Activated T-helper 1 cell treated with anti-CD3 and anti-CD28 coated beads, Interleukin-12 subunit alpha, Interleukin-12 subunit beta, Interleukin-2, Interleukin-4 antibody, amounts not matched to agents 30 ng/mL and 10 ng/mL and 1 ng/mL, durations not matched to agents 14 hours and 24 hours and 36 hours (primary cell): ENCODE measurements at regions of chr6 and their contacts with region 1.

Region 1: GRCh38 chr6:166950443-166950821 is 5.9 kb downstream of the RNASET2 start:
- DNase-seq: no peak
- H3K4me3 Mint-ChIP-seq: peak overlapping the region; percentile 78
- H3K27ac Mint-ChIP-seq: peak overlapping the region; percentile 89
- H3K4me1 Mint-ChIP-seq: peaks cover 54% of the 10 kb centered on the region
- H3K27me3 Mint-ChIP-seq: no peaks in the 10 kb centered on the region

Region 2: DNA sequence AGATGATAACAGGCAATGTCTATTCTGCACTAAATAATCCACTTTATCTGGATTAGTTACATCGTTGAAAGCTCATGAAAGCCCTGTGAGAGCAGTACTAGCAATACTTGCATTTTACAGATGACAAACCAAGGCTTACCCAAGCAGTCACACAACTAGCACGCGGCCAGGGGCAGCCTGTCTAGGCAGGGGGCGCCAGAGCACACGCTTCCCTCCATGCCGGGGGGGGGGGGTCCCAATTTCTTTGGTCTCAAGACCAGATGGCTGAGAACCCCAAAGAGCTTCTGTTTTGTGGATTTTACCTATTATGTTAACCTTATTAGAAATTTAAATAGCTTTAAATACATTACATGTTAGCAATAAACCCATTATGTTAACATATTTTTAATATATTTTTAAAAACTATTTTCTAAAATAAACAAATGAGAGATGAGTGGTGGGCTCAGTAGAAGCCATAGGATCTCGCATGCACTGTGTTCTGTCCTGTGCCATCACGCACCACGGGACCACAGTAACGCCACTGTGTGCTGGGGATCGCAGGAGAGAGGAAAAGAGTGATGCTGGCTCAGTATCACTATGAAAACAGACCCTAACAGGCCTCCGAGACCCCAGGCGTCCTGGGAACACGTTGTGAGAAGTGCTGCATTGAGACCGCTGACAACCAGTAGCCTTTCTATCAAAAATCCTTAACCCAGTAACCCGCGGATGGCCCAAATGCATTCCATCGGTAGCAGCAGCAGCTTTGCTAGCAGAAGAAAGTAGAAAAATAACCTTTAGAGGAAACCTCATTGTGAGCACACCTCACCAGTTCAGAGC is 637.0 kb before region 1 on chr6:
- intact Hi-C with region 1: no loop called
- DNase-seq: no peak
- H3K4me3 Mint-ChIP-seq: no peak overlapping the region
- H3K27ac Mint-ChIP-seq: no peak overlapping the region
- H3K4me1 Mint-ChIP-seq: no peaks in the 10 kb centered on the region
- H3K27me3 Mint-ChIP-seq: peaks cover 23% of the 10 kb centered on the region

Region 3: DNA sequence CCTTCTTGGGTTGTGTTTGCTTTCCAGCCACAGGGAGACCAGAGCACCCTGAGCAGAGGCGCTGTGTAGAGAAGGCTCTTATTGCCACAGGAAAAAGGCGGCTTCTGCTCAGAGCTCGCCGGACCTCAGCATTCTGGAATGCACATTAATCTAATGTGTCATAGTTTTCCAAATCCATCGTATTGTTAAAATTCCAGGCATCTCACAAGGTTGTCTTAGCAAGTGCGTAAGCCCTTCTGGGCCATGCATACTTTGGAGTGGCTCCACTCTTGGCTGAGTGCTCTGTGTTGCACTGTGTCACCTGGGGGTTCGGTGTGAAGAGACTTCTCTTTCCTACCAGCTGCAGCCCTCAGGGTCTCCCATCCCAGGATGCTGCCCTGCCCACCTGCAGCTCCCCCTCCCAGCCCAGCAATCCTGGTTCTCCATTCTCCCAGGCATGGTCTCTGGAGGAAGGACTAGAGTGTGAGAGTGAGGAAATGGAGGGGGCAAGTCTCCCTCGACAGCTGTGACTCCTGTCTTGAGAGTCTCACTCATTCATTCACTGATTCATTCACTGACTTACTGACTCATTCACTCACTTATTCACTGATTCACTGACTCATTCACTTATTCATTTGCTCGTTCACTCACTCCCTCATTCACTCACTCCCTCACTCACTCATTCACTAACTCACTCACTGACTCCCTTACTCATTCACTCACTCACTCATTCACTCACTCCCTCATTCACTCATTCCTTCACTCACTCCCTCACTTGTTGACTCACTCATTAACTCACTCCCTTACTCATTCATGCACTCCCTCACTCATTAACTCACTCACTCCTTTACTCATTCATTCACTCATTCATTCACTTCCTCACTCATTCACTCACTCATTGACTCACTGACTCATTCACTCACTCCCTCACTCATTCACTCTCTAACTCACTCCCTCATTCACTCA is 484.0 kb before region 1 on chr6:
- intact Hi-C with region 1: no loop called
- DNase-seq: no peak
- H3K4me3 Mint-ChIP-seq: no peak overlapping the region
- H3K27ac Mint-ChIP-seq: no peak overlapping the region
- H3K4me1 Mint-ChIP-seq: no peaks in the 10 kb centered on the region
- H3K27me3 Mint-ChIP-seq: no peaks in the 10 kb centered on the region

Region 4: DNA sequence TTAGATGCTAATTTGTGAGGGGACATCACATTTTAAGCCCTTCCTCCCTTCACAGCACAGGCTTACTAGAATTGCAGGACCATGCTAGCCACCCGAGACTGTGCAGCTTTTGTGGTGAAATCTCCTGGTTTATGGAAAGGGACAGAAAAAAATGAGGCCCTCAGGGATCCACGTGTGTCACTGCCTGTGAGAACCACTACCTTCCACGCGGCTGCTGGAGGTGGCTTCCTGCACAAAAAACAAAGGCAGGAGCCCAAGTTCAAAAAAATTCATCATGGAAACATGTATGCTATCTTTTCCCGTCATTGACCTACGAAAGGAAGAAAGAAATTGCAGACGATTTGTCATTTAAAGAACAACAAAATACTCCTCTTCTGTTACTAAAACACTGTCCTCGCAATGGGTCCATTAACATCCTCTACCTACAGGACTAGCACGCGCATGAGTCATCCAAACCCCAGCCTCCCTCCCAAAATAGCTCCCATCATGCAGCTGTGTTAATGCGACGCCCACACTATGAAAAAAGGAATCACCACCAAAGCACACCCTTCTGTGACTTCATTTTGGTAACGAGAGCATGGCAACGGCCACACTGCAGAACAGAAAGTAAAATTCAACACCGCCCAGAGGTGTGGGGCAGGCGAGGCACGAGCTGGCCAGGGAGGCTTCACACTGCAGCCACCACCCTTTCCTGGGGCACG is 409.7 kb before region 1 on chr6:
- intact Hi-C with region 1: loop called (anchors 5 kb)
- DNase-seq: peak; percentile 39
- H3K4me3 Mint-ChIP-seq: peak overlapping the region; percentile 72
- H3K27ac Mint-ChIP-seq: peak overlapping the region; percentile 86
- H3K4me1 Mint-ChIP-seq: peaks cover 26% of the 10 kb centered on the region
- H3K27me3 Mint-ChIP-seq: peaks cover 5% of the 10 kb centered on the region

Region 5: DNA sequence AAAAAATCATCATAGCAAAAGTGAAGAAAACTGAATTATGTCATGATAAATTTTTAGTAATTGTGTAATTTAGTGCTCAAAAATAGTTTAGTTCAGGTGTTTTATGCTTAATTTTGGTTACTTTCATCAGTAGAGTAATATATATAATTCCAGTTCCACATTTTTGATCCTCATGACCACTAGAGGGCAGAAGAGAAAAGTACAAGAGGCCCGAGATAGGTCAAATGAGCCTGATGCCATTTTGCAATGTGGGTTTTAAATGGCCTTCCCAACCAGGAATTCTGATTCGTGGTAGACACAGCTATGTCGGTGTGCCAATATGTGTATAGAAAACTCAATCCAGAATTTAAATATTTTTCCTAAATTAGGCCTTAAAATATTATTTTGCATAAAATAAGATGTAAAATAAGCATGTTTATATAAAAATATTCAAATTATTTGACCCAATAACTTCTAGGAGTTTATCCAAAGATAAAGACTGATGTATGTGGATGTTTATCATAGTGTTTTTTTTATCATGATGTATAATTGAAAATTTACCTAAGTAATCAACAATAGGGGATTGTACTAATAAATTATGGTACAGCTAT is 163.6 kb before region 1 on chr6:
- intact Hi-C with region 1: loop called (anchors 1 kb)
- DNase-seq: no peak
- H3K4me3 Mint-ChIP-seq: no peak overlapping the region
- H3K27ac Mint-ChIP-seq: no peak overlapping the region
- H3K4me1 Mint-ChIP-seq: no peaks in the 10 kb centered on the region
- H3K27me3 Mint-ChIP-seq: peaks cover 4% of the 10 kb centered on the region

Region 6: DNA sequence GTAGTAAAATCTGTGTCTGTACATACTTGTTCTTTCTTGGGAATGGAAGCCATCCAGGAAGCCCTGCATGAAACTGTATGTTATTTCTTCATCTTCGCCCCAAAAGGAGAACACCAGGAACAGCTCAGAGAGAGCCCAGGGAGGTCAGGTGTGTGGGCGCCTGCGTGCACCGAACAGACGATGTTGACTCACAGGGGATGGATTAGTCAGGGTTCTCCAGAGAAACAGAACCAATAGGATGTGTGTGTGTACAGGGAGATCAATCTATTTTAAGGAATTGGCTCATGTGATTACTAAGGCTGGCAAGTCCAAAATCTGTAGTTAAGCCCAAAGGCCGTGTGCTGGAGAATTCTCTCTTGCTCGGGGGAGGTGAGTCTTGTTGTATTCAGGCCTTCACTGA is 39.8 kb before region 1 on chr6:
- intact Hi-C with region 1: loop called (anchors 5 kb)
- DNase-seq: no peak
- H3K4me3 Mint-ChIP-seq: no peak overlapping the region
- H3K27ac Mint-ChIP-seq: no peak overlapping the region
- H3K4me1 Mint-ChIP-seq: peaks cover 46% of the 10 kb centered on the region
- H3K27me3 Mint-ChIP-seq: no peaks in the 10 kb centered on the region

Region 7: GRCh38 chr6:167047554-167047953 is 97.1 kb after region 1 on chr6:
- intact Hi-C with region 1: loop called (anchors 2 kb)
- DNase-seq: peak; percentile 29
- H3K4me3 Mint-ChIP-seq: peak overlapping the region; percentile 19
- H3K27ac Mint-ChIP-seq: peak overlapping the region; percentile 33
- H3K4me1 Mint-ChIP-seq: peaks cover 21% of the 10 kb centered on the region
- H3K27me3 Mint-ChIP-seq: no peaks in the 10 kb centered on the region